ENCODE measurements at regions of chr2 and their contacts with region 1.

Region 1: GRCh38 chr2:48471048-48471474 is 58.9 kb upstream of the STON1 start:
- DNase-seq: no peak
- ATAC-seq: peak; percentile 74
- H3K4me3 ChIP-seq: no peak overlapping the region
- H3K27ac ChIP-seq: no peak overlapping the region
- H3K4me1 ChIP-seq: no peaks in the 10 kb centered on the region
- H3K27me3 ChIP-seq: no peaks in the 10 kb centered on the region

Region 2: DNA sequence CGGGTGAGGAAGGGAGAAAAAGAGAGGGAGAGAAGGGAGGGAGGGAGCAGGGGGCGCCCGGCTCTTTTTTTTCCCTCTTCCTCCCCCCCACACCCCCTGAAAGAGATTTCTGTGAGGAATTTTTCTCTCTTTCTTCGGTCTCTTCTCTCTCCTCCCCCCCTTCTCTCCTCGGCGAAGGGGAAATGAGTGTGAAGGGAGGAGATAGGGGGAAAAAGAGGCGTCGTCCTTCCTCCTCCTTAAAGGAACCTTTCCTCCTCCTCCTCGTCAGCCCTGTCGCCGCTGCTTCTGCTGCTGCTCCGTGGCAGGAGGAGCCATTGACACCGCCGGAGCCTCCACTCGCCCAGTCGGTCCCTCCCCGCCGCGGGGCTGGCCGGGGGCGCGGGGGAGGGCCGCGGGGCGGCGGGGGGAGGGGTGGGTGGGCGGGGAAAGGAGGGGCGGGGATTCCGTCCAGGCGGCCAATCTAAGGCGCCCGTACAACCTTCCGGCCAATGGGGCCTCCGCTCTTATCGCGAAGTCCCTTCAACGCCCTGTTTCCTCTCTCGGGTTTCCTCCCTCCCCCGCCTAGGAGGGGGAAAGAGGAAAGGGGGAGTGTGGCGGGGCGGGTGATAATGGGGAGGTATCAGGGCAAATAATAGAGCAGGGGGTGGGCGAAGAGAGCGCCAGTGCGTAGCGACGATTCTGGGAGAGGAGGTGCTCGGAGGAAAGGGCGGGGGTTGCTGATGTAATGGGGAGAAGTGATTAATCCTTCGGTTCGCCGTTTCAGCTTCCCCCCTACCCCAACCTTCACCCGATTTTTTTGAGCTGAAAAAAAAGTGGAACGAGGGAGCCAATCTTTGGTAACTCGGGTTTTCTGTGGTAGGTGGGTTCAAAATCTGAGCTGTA is 564.7 kb before region 1 on chr2 and contains the start of gene FBXO11:
- intact Hi-C with region 1: no loop called
- DNase-seq: peak; percentile 96 to 98
- ATAC-seq: peak; percentile 96
- H3K4me3 ChIP-seq: peak within 1 kb of the TSS; percentile 98 to 99
- H3K27ac ChIP-seq: peak within 1 kb of the TSS; percentile 80 to 99
- H3K4me1 ChIP-seq: no peaks in the 10 kb centered on the region
- H3K27me3 ChIP-seq: no peaks in the 10 kb centered on the region
- total RNA-seq, gene FBXO11: 64.8 to 80.4 TPM

Region 3: DNA sequence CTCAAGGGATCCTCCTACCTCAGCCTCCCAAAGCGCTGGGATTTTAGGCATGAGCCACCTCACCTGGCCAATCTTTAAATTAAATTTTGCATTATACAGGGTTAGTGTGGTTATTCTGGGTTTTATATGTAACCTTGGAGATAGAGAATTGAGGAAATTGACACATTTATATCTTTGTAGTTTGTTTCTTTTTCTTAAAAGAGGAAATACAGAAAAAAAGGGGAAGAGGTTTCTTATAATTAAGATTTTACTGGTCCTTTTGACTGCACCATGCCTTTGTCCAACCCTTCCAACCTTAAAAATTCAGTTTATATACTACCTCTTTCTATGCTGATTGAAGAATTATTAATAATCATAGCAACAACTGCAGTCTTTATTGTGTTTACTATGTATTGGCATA is 151.2 kb before region 1 on chr2:
- intact Hi-C with region 1: no loop called
- DNase-seq: no peak
- ATAC-seq: no peak
- H3K4me3 ChIP-seq: no peak overlapping the region
- H3K27ac ChIP-seq: no peak overlapping the region
- H3K4me1 ChIP-seq: peaks cover 0 to 2% of the 10 kb centered on the region in 2 donors
- H3K27me3 ChIP-seq: no peaks in the 10 kb centered on the region

Region 4: GRCh38 chr2:48397846-48398245 is 73.2 kb before region 1 on chr2:
- intact Hi-C with region 1: no loop called
- DNase-seq: no peak
- ATAC-seq: no peak
- H3K4me3 ChIP-seq: no peak overlapping the region
- H3K27ac ChIP-seq: no peak overlapping the region
- H3K4me1 ChIP-seq: no peaks in the 10 kb centered on the region
- H3K27me3 ChIP-seq: no peaks in the 10 kb centered on the region

Region 5: DNA sequence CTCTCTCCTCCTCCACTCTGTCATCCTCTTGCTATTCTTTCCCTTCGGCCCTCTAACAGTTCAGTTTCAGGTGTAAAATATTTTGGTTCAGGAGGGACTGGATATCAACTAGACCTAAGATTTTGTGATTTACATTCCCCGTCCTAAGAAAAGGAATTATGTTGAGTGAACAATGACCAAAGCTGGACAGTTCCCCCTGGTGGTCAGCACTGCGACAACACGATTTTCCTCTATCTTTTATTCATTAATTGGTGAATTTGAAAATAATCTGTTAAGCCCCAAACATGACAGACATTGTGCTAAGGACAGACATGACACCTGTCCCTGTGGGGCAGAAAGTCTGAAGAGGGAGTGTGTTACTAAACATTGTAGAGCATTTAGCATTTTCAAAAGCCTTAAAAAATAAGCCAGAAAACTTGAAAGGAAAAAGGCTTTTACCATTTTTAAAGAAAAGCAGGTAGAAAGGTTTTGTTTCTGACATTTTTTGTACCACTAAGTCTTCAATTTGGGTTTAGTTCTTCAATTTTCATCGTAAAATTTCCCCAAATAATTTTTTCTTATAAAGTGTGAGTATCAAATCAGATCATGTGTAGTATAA is 118.2 kb after region 1 on chr2:
- intact Hi-C with region 1: loop called (anchors 5 to 10 kb)
- DNase-seq: no peak
- ATAC-seq: no peak
- H3K4me3 ChIP-seq: no peak overlapping the region
- H3K27ac ChIP-seq: no peak overlapping the region
- H3K4me1 ChIP-seq: no peaks in the 10 kb centered on the region
- H3K27me3 ChIP-seq: no peaks in the 10 kb centered on the region

Measured in aorta (tissue), 5 donors.